ENCODE measurements at regions of chr12 and their contacts with region 1.

Region 1: GRCh38 chr12:2890388-2891239 is at the start of gene TULP3:
- DNase-seq: peak; percentile 98 to 99
- ATAC-seq: peak; percentile 95 to 99 (median 96)
- H3K4me3 ChIP-seq: peak within 1 kb of the TSS; percentile 80
- H3K4me3 Mint-ChIP-seq: peak within 1 kb of the TSS; percentile 94
- H3K27ac ChIP-seq: peak within 1 kb of the TSS; percentile 77
- H3K27ac Mint-ChIP-seq: peak within 1 kb of the TSS; percentile 89 to 95
- H3K4me1 ChIP-seq: peaks cover 17% of the 10 kb centered on the region
- H3K4me1 Mint-ChIP-seq: peaks cover 16 to 24% of the 10 kb centered on the region in 2 donors
- H3K27me3 ChIP-seq: no peaks in the 10 kb centered on the region
- H3K27me3 Mint-ChIP-seq: no peaks in the 10 kb centered on the region
- CTCF ChIP-seq: no peak
- total RNA-seq, gene TULP3: 5.1 to 8.7 (median 6.2) TPM

Region 2: DNA sequence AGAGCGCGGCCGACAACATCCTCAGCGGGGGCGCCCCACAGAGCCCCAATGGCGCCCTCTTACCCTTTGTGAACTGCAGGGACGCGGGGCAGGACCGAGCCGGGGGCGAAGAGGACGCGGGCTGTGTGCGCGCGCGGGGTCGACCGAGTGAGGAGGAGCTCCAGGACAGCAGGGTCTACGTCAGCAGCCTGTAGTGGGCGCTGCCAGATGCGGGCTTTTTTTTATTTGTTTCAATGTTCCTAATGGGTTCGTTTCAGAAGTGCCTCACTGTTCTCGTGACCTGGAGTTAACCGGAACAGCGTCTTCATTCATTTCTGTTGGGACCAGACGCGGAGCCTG is 199.6 kb before region 1 on chr12:
- intact Hi-C with region 1: loop called (anchors 2 kb)
- DNase-seq: peak; percentile 46 to 78
- ATAC-seq: peak; percentile 74 to 77 (median 75)
- H3K4me3 ChIP-seq: peak overlapping the region; percentile 76
- H3K4me3 Mint-ChIP-seq: peak overlapping the region; percentile 94
- H3K27ac ChIP-seq: peak overlapping the region; percentile 83
- H3K27ac Mint-ChIP-seq: peak overlapping the region; percentile 84 to 85
- H3K4me1 ChIP-seq: peaks cover 25% of the 10 kb centered on the region
- H3K4me1 Mint-ChIP-seq: peaks cover 36 to 39% of the 10 kb centered on the region in 2 donors
- H3K27me3 ChIP-seq: no peaks in the 10 kb centered on the region
- H3K27me3 Mint-ChIP-seq: peaks cover 2 to 5% of the 10 kb centered on the region in 2 donors
- CTCF ChIP-seq: peak; percentile 16

Region 3: GRCh38 chr12:2710701-2711100 is 179.9 kb before region 1 on chr12:
- intact Hi-C with region 1: no loop called
- DNase-seq: no peak
- ATAC-seq: no peak
- H3K4me3 ChIP-seq: no peak overlapping the region
- H3K4me3 Mint-ChIP-seq: no peak overlapping the region
- H3K27ac ChIP-seq: no peak overlapping the region
- H3K27ac Mint-ChIP-seq: no peak overlapping the region
- H3K4me1 ChIP-seq: no peaks in the 10 kb centered on the region
- H3K4me1 Mint-ChIP-seq: no peaks in the 10 kb centered on the region
- H3K27me3 ChIP-seq: peaks cover 4% of the 10 kb centered on the region
- H3K27me3 Mint-ChIP-seq: peaks cover 27 to 40% of the 10 kb centered on the region in 2 donors
- CTCF ChIP-seq: no peak

Region 4: GRCh38 chr12:2877047-2877952 is 13.3 kb before region 1 on chr12 and contains the starts of genes FOXM1 and RHNO1:
- intact Hi-C with region 1: loop called (anchors 2 kb)
- DNase-seq: peak; percentile 91 to 93
- ATAC-seq: peak; percentile 85 to 91 (median 88)
- H3K4me3 ChIP-seq: peak within 1 kb of the TSS; percentile 94
- H3K4me3 Mint-ChIP-seq: peak within 1 kb of the TSS; percentile 98
- H3K27ac ChIP-seq: peak within 1 kb of the TSS; percentile 91
- H3K27ac Mint-ChIP-seq: peak within 1 kb of the TSS; percentile 95 to 98
- H3K4me1 ChIP-seq: peaks cover 18% of the 10 kb centered on the region
- H3K4me1 Mint-ChIP-seq: peaks cover 21 to 27% of the 10 kb centered on the region in 2 donors
- H3K27me3 ChIP-seq: no peaks in the 10 kb centered on the region
- H3K27me3 Mint-ChIP-seq: no peaks in the 10 kb centered on the region
- CTCF ChIP-seq: no peak
- total RNA-seq, gene FOXM1: 1.8 to 3.6 (median 2.6) TPM
- total RNA-seq, gene RHNO1: 9.2 to 13.6 (median 9.4) TPM

Measured in natural killer cell (primary cell).